Mucosa of descending colon (tissue), 3 donors: ENCODE measurements at regions of chr5 and their contacts with region 1.

Region 1: DNA sequence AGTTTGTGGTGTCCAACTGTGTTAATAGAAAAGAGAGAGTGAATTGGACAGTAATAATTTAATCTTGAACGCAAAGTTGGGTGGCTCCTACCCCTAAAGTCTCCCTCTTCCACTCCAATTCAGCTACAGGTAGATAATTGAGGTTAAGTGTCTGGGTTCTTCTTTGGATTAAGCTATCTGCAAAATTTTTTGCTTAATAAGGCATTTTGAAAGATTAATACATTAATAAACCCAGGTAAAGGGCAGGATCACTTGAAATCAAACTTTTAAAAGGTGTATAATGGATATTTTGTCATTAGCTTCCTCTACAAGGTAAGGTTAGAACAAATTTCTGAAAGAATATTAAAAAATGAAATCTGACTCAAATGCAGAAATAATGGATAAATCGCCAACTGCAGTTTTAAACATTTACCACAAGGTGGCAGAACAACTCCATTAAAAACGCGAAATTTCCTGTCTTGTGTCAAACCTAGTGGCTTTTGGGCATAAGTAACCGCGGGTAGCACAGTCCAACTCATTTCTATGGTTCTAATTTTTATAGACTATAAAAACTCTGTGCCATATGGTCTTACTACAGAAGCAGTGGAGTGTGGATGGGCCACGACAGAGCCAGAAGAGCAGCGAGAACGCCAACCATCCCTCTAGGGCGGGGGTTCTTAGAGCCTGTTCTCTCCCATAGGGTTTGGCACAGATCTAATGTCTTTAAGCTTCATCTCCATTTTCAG is 276.5 kb downstream of the ARHGEF28 start:
- DNase-seq: peak in 1 of 3 donors; percentile 11
- ATAC-seq: peak; percentile 71
- H3K4me3 ChIP-seq: no peak overlapping the region
- H3K4me1 ChIP-seq: no peaks in the 10 kb centered on the region
- CTCF ChIP-seq: peak; percentile 69

Region 2: DNA sequence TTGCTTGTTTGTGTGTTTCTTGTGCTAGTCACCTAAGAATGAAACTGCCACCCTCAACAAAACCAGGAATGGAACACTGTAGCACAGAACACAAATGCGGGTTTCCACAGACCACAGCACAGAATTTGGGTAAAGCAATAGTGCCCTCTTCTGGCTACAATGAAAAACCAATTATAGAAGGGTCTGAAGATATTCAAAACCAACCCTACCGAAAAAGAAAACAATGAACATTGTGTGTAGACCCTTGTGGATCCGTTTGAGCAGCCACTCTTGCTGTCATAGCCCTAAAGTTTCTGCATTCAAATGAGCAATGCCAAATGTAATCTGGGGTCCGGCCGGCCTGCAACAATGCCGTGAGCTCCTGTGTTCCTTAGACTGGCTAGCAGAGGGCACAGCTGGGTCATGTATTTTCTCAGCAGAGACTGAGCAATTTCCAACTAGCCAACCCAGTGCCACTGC is 746.4 kb after region 1 on chr5:
- intact Hi-C with region 1: loop called in 1 of 2 experiments (anchors 5 kb)
- DNase-seq: no peak
- ATAC-seq: peak; percentile 84
- H3K4me3 ChIP-seq: no peak overlapping the region
- H3K4me1 ChIP-seq: peaks cover 3% of the 10 kb centered on the region
- CTCF ChIP-seq: no peak